Naive thymus-derived CD4-positive, alpha-beta T cell (primary cell): ENCODE measurements at regions of chr14 and their contacts with region 1.

Region 1: DNA sequence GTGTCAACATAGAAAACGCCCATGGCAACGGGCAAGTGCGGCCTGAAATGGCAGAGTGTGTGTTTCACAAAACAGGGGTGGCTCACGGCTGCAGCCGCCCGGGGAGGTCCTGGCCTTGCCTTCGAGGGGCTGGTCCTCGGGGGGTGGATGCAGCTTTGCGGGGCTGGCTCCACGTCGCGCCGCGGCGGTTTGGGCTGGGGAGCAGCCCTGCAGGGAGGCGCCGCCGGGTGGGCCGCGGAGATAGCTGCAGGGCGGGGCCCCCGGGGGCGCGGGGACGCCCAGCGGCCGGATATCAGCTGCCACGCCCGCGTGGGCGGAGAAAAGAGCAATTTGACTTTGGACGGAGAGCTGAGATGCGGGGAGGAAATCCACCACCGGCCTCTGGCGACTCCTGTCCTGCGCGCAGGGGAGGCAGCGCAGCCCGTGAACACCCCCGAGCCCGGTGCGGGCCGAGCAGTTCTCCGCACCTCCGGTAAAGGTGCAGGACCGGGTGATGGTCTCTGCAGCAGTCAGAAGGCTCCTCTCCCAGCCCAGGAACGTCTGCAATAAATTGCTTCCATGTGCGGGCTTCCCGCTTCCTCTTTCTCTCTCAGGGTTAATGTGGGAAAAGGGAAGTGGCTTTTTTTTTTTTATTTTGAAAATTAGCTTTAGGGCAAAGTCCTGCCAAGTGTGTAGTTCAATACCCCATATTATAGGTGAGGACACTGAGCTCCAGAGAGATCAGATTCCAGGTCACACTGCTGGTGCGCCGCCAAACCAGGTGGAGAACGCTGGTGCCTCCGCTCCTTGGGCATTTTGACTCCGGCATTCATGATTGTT is 110.5 kb downstream of the ARF6 start:
- DNase-seq: peak; percentile 63 to 84 (median 69)
- ATAC-seq: peak; percentile 62
- H3K4me3 ChIP-seq: peak overlapping the region; percentile 64
- H3K4me3 Mint-ChIP-seq: peak overlapping the region; percentile 74 to 95 (median 90)
- H3K27ac ChIP-seq: peak overlapping the region; percentile 90
- H3K27ac Mint-ChIP-seq: peak overlapping the region; percentile 90 to 99 (median 98)
- H3K4me1 ChIP-seq: peaks cover 47 to 48% of the 10 kb centered on the region in 2 donors
- H3K4me1 Mint-ChIP-seq: peaks cover 40 to 71% (median 63%) of the 10 kb centered on the region in 7 donors
- H3K27me3 ChIP-seq: no peaks in the 10 kb centered on the region
- H3K27me3 Mint-ChIP-seq: no peaks in the 10 kb centered on the region

Region 2: DNA sequence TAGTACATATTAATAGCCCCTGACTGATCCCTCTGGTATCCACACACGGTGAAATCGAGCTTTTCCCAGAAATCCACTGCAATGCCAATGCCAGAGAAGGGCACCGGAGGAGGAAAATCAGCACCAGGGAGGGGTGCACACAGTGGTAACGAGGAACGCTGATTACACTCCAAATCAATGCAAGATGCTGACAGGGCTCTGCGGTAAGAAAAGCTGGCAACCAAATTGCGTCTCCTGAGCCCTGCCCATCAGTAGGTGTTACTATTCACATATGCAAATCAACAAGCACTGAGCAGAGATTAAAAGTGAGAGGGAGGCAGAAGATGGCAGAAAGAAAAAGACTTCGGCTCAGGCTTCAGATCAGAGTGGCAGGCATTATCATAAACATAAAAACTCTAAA is 576.3 kb before region 1 on chr14:
- CTCF ChIA-PET with region 1: no interaction called
- POLR2A ChIA-PET with region 1: no interaction called
- intact Hi-C with region 1: no loop called
- DNase-seq: no peak
- ATAC-seq: no peak
- H3K4me3 ChIP-seq: no peak overlapping the region
- H3K4me3 Mint-ChIP-seq: no peak overlapping the region
- H3K27ac ChIP-seq: no peak overlapping the region
- H3K27ac Mint-ChIP-seq: no peak overlapping the region
- H3K4me1 ChIP-seq: no peaks in the 10 kb centered on the region
- H3K4me1 Mint-ChIP-seq: no peaks in the 10 kb centered on the region
- H3K27me3 ChIP-seq: no peaks in the 10 kb centered on the region
- H3K27me3 Mint-ChIP-seq: peaks cover 10 to 62% (median 36%) of the 10 kb centered on the region in 5 donors

Region 3: GRCh38 chr14:49767562-49768300 is 235.7 kb before region 1 on chr14 and contains the start of gene KLHDC2:
- CTCF ChIA-PET with region 1: no interaction called
- POLR2A ChIA-PET with region 1: no interaction called
- intact Hi-C with region 1: loop called in 1 of 2 experiments (anchors 5 kb)
- DNase-seq: peak; percentile 84 to 94 (median 89)
- ATAC-seq: peak; percentile 88
- H3K4me3 ChIP-seq: peak within 1 kb of the TSS; percentile 62
- H3K4me3 Mint-ChIP-seq: peak within 1 kb of the TSS; percentile 95 to 99 (median 98)
- H3K27ac ChIP-seq: peak within 1 kb of the TSS; percentile 96
- H3K27ac Mint-ChIP-seq: peak within 1 kb of the TSS; percentile 98 to 100 (median 99)
- H3K4me1 ChIP-seq: peaks cover 26 to 27% of the 10 kb centered on the region in 2 donors
- H3K4me1 Mint-ChIP-seq: peaks cover 20 to 46% (median 40%) of the 10 kb centered on the region in 7 donors
- H3K27me3 ChIP-seq: no peaks in the 10 kb centered on the region
- H3K27me3 Mint-ChIP-seq: peaks cover 0 to 2% (median 0%) of the 10 kb centered on the region in 5 donors
- total RNA-seq, gene KLHDC2: 33.2 to 105 (median 84.7) TPM

Region 4: GRCh38 chr14:49879683-49880204 is 123.7 kb before region 1 on chr14:
- CTCF ChIA-PET with region 1: interaction called, 9 read pairs
- POLR2A ChIA-PET with region 1: interaction called, 4 read pairs
- intact Hi-C with region 1: loop called in 1 of 2 experiments (anchors 1 kb)
- DNase-seq: peak in 8 of 9 donors; percentile 32 to 64 (median 48)
- ATAC-seq: peak; percentile 92
- H3K4me3 ChIP-seq: no peak overlapping the region
- H3K4me3 Mint-ChIP-seq: no peak overlapping the region
- H3K27ac ChIP-seq: no peak overlapping the region
- H3K27ac Mint-ChIP-seq: peak overlapping the region in 6 of 9 donors; percentile 17 to 74 (median 44)
- H3K4me1 ChIP-seq: peaks cover 0 to 6% of the 10 kb centered on the region in 2 donors
- H3K4me1 Mint-ChIP-seq: peaks cover 10 to 30% (median 12%) of the 10 kb centered on the region in 7 donors
- H3K27me3 ChIP-seq: no peaks in the 10 kb centered on the region
- H3K27me3 Mint-ChIP-seq: peaks cover 0 to 3% (median 0%) of the 10 kb centered on the region in 5 donors

Region 5: GRCh38 chr14:49959822-49960408 is 43.5 kb before region 1 on chr14:
- CTCF ChIA-PET with region 1: no interaction called
- POLR2A ChIA-PET with region 1: interaction called, 3 read pairs
- intact Hi-C with region 1: loop called in 1 of 2 experiments (anchors 1 kb)
- DNase-seq: peak in 7 of 9 donors; percentile 19 to 51 (median 35)
- ATAC-seq: peak; percentile 70
- H3K4me3 ChIP-seq: no peak overlapping the region
- H3K4me3 Mint-ChIP-seq: peak overlapping the region in 9 of 10 donors; percentile 13 to 72 (median 59)
- H3K27ac ChIP-seq: peak overlapping the region; percentile 32
- H3K27ac Mint-ChIP-seq: peak overlapping the region; percentile 57 to 85 (median 79)
- H3K4me1 ChIP-seq: peaks cover 0 to 17% of the 10 kb centered on the region in 2 donors
- H3K4me1 Mint-ChIP-seq: peaks cover 13 to 43% (median 31%) of the 10 kb centered on the region in 7 donors
- H3K27me3 ChIP-seq: no peaks in the 10 kb centered on the region
- H3K27me3 Mint-ChIP-seq: no peaks in the 10 kb centered on the region

Region 6: GRCh38 chr14:49992901-49993335 is 10.5 kb before region 1 on chr14:
- CTCF ChIA-PET with region 1: interaction called, 3 read pairs
- POLR2A ChIA-PET with region 1: interaction called, 36 read pairs
- intact Hi-C with region 1: no loop called
- DNase-seq: peak in 1 of 9 donors; percentile 41
- ATAC-seq: peak; percentile 18
- H3K4me3 ChIP-seq: no peak overlapping the region
- H3K4me3 Mint-ChIP-seq: no peak overlapping the region
- H3K27ac ChIP-seq: no peak overlapping the region
- H3K27ac Mint-ChIP-seq: peak overlapping the region in 2 of 9 donors; percentile 21 to 78
- H3K4me1 ChIP-seq: peaks cover 1 to 4% of the 10 kb centered on the region in 2 donors
- H3K4me1 Mint-ChIP-seq: peaks cover 10 to 56% (median 18%) of the 10 kb centered on the region in 7 donors
- H3K27me3 ChIP-seq: no peaks in the 10 kb centered on the region
- H3K27me3 Mint-ChIP-seq: no peaks in the 10 kb centered on the region

Region 7: DNA sequence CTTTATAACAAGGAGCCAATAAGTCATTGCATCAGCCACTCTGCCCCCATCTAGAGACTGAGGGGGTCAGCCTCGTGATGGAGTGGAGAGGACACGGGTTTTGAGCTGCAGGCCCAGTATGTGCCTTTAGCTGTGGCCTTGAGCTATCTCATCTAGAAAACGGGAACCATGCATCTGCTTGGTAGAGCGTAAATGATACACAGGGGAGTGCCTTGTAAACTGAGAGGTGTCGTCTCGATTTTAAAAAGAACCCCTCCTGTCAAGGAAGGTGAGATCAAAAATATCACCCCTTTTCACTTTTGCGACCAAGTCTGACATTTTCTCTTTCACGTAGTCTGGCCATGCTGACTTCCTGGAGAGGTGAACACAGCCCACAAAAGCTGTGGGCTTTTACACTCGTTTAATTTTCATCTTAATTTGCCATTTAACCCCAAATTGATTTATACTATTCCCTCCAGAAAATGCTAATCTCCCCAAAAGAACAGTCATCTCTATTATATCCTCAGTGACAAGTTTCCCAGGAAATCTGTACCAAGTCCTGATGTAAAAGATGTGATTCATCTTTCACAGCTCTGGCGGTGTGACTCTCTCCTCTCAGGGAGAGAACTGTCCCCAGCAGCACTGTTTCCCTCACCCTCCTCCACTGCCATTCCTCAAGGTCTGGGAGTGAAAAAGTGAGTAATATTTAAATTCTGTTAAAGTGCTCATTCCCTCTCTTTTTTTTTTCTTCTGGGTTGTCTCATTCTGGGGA is 82.3 kb after region 1 on chr14:
- CTCF ChIA-PET with region 1: interaction called, 7 read pairs
- POLR2A ChIA-PET with region 1: interaction called, 20 read pairs
- intact Hi-C with region 1: loop called (anchors 1 kb)
- DNase-seq: peak in 1 of 9 donors; percentile 45
- ATAC-seq: no peak
- H3K4me3 ChIP-seq: no peak overlapping the region
- H3K4me3 Mint-ChIP-seq: peak overlapping the region; percentile 56 to 80 (median 70)
- H3K27ac ChIP-seq: peak overlapping the region; percentile 97
- H3K27ac Mint-ChIP-seq: peak overlapping the region; percentile 86 to 97 (median 90)
- H3K4me1 ChIP-seq: peaks cover 86 to 94% of the 10 kb centered on the region in 2 donors
- H3K4me1 Mint-ChIP-seq: peaks cover 65 to 97% (median 91%) of the 10 kb centered on the region in 7 donors
- H3K27me3 ChIP-seq: no peaks in the 10 kb centered on the region
- H3K27me3 Mint-ChIP-seq: no peaks in the 10 kb centered on the region

Region 8: DNA sequence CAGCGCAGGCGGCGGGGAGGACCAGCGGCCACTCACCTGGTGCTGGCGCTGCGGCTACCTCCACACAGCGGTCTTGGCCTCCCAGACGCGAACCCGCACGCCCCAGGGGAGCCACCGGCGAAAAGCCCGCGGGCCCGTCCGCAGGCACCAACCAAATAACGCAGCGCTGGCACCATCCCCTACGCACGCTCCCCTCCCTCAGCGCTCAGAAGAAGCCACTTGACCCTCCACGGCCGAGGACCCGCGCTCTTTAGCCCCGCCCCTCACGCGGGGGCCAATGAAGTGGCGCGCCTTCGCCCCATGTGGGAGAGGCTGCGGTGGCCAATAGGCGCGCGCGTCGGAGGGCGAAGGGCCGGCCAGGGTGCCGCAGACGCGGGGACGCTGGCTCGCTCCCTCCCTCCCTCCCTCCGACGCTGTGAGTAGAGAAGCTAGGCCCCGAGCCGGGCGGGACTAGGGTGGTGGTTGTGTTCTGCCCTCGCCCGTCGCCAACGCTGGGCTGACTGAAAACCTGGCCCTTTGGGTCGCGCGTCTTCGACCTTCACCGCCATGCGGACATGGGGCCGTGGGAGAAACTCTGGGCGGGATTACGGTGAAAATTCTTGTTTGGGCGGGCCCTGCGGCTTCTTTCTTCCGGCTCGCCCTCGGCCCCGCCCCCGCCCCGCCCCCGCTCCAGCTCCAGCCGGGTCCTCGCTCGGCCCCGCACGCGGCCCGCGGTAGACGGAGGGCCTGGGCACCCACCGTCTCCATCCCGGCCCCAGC is 308.7 kb after region 1 on chr14 and contains the starts of genes DMAC2L and L2HGDH:
- CTCF ChIA-PET with region 1: no interaction called
- POLR2A ChIA-PET with region 1: no interaction called
- intact Hi-C with region 1: loop called in 1 of 2 experiments (anchors 5 kb)
- DNase-seq: peak; percentile 80 to 95 (median 88)
- ATAC-seq: peak; percentile 94
- H3K4me3 ChIP-seq: peak within 1 kb of the TSS; percentile 88
- H3K4me3 Mint-ChIP-seq: peak within 1 kb of the TSS; percentile 86 to 99 (median 96)
- H3K27ac ChIP-seq: peak within 1 kb of the TSS; percentile 84
- H3K27ac Mint-ChIP-seq: peak within 1 kb of the TSS; percentile 95 to 99 (median 98)
- H3K4me1 ChIP-seq: peaks cover 11 to 12% of the 10 kb centered on the region in 2 donors
- H3K4me1 Mint-ChIP-seq: peaks cover 16 to 56% (median 46%) of the 10 kb centered on the region in 7 donors
- H3K27me3 ChIP-seq: no peaks in the 10 kb centered on the region
- H3K27me3 Mint-ChIP-seq: no peaks in the 10 kb centered on the region
- total RNA-seq, gene DMAC2L: 15.5 to 21.2 (median 16.7) TPM
- total RNA-seq, gene L2HGDH: 3.7 to 10.1 (median 4.8) TPM